ENCODE measurements at regions of chr20 and their contacts with region 1.

Region 1: DNA sequence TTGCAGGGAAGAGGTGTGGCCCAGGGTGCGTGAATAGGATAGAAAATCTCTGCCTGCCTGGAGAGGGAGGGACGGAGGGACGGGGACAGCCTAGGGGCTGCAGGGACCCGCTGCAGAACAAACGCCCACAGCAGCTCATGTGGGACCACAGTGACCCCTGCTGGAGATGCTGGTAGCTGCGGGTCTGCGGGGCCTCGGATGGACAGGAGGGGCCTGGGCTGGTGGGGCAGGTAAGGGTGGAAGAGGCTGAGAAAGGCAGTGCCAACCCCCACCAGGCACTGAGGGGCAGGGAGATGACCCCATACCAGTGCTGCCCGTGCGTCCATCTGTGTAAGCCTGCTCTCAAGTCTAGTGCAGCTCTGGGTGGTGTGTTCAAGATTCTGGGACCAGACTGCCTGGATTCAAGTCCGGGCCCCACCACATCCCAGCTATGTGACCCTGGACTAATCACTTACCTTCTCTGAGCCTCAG is 39.4 kb downstream of the KIAA1755 start:
- DNase-seq: peak; percentile 42 to 76 (median 58)
- ATAC-seq: peak; percentile 64
- H3K4me3 ChIP-seq: no peak overlapping the region
- H3K4me3 Mint-ChIP-seq: no peak overlapping the region
- H3K27ac ChIP-seq: no peak overlapping the region
- H3K27ac Mint-ChIP-seq: no peak overlapping the region
- H3K4me1 ChIP-seq: peaks cover 5% of the 10 kb centered on the region
- H3K4me1 Mint-ChIP-seq: no peaks in the 10 kb centered on the region
- H3K27me3 ChIP-seq: peaks cover 0 to 5% of the 10 kb centered on the region in 2 experiments
- H3K27me3 Mint-ChIP-seq: no peaks in the 10 kb centered on the region
- CTCF ChIP-seq: peak; percentile 76

Region 2: DNA sequence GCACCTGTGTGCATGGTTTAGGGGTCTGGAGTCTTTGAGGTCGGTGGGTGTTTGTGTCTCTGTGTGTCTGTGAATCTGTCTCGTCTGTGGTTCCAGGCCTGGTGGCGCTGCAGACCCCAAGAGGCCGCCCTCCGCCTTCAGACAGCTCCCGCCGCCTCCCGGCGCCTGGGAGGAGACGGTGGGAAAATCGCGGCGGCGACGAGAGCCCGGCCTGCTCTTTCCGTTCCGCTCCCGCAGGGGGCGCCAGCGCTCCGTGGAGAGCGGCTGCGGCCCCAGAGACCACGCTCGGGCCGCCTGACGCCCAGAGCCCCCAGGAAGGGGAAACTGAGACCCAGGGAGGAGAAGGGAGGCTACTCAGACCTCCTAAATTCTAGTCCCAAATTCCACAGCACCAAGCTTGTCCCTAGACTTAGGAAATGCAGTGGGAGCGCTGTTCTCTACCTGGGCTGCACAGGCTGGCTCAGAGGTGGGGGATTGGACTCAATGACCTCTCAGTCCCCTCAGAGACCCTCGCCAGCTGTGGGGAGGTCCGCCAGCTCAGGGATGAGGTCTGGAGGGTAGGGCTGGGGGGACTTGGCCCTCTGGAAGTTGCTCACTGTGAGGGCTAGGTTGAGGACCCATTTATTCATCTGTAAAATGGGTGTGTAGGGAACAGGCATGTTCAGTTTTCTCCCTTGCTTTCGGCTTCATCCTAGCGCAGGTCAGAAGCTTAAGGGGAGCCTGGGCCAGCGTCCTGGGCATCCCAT is 656.6 kb before region 1 on chr20:
- CTCF ChIA-PET with region 1: no interaction called
- POLR2A ChIA-PET with region 1: no interaction called
- intact Hi-C with region 1: loop called in 1 of 2 experiments (anchors 1 kb)
- DNase-seq: peak in 13 of 14 experiments; percentile 3 to 64 (median 23)
- ATAC-seq: no peak
- H3K4me3 ChIP-seq: no peak overlapping the region
- H3K4me3 Mint-ChIP-seq: no peak overlapping the region
- H3K27ac ChIP-seq: no peak overlapping the region
- H3K27ac Mint-ChIP-seq: no peak overlapping the region
- H3K4me1 ChIP-seq: peaks cover 7% of the 10 kb centered on the region
- H3K4me1 Mint-ChIP-seq: peaks cover 4% of the 10 kb centered on the region
- H3K27me3 ChIP-seq: peaks cover 33 to 49% of the 10 kb centered on the region in 2 experiments
- H3K27me3 Mint-ChIP-seq: peaks cover 73% of the 10 kb centered on the region
- CTCF ChIP-seq: peak; percentile 71

Region 3: GRCh38 chr20:37651932-37652331 is 569.2 kb before region 1 on chr20:
- CTCF ChIA-PET with region 1: no interaction called
- POLR2A ChIA-PET with region 1: no interaction called
- intact Hi-C with region 1: loop called in 1 of 2 experiments (anchors 5 kb)
- DNase-seq: peak in 5 of 14 experiments; percentile 4 to 29 (median 16)
- ATAC-seq: peak; percentile 34
- H3K4me3 ChIP-seq: no peak overlapping the region
- H3K4me3 Mint-ChIP-seq: no peak overlapping the region
- H3K27ac ChIP-seq: no peak overlapping the region
- H3K27ac Mint-ChIP-seq: no peak overlapping the region
- H3K4me1 ChIP-seq: no peaks in the 10 kb centered on the region
- H3K4me1 Mint-ChIP-seq: no peaks in the 10 kb centered on the region
- H3K27me3 ChIP-seq: peaks cover 0 to 6% of the 10 kb centered on the region in 2 experiments
- H3K27me3 Mint-ChIP-seq: peaks cover 25% of the 10 kb centered on the region
- CTCF ChIP-seq: no peak

Region 4: GRCh38 chr20:38073307-38074071 is 147.7 kb before region 1 on chr20:
- CTCF ChIA-PET with region 1: interaction called, 13 read pairs
- POLR2A ChIA-PET with region 1: no interaction called
- intact Hi-C with region 1: loop called in 1 of 2 experiments (anchors 5 kb)
- DNase-seq: peak in 4 of 14 experiments; percentile 5 to 63 (median 50)
- ATAC-seq: peak; percentile 68
- H3K4me3 ChIP-seq: no peak overlapping the region
- H3K4me3 Mint-ChIP-seq: no peak overlapping the region
- H3K27ac ChIP-seq: no peak overlapping the region
- H3K27ac Mint-ChIP-seq: peak overlapping the region; percentile 2
- H3K4me1 ChIP-seq: peaks cover 3% of the 10 kb centered on the region
- H3K4me1 Mint-ChIP-seq: peaks cover 31% of the 10 kb centered on the region
- H3K27me3 ChIP-seq: no peaks in the 10 kb centered on the region
- H3K27me3 Mint-ChIP-seq: no peaks in the 10 kb centered on the region
- CTCF ChIP-seq: peak; percentile 62

Measured in CD4-positive, alpha-beta T cell (primary cell).